ENCODE measurements at regions of chr15 and their contacts with region 1.

Region 1: DNA sequence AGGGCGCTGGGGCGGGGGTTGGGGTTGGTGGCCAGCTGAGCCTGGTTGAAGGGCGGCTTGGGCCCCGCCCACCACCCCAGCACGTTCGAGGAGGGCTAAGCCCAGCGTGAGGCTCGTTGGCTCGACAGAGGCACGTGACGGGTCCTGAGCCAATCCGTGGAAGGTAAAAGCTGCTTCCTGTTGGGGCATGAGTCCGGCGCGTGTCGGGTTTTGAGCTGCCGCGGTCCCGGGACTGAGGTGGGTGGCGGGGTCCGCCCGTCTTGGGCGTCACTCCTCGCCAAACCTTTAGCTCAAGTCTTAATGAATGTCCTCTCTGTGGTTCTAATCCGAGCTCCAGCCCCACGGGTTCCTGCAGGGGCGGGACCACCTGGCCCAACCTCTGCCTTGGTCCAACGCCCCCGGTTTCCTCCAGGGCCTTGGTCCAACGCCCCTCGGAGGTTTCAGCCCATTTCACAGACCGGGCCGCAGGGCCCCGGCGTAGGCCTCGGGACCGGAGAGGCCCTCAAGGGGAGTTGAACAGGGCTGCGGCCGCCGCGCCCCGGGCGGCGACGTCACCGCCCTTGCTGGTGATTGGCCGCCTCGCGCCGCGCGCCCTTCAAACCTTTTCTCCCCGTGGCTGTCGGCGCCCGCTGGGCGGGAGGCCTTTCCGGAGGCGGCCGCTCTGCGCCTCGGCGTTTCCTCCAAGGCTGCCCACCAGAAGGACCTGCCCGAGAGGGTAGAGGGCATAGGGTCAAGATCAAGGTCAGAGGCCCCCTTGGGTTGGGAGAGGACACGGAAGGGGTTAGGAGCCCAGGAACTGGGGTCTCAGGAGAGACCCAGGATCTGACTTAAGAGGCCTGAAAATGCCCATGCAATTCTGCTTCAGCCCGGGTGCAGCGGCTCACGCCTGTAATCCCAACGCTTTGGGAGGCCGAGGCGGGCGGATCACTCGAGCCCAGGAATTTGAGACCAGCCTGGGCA is at the start of gene RCCD1:
- DNase-seq: peak; percentile 83
- ATAC-seq: peak; percentile 47
- H3K4me3 ChIP-seq: peak within 1 kb of the TSS; percentile 77
- H3K27ac ChIP-seq: peak within 1 kb of the TSS; percentile 86
- H3K4me1 ChIP-seq: peaks cover 21% of the 10 kb centered on the region
- H3K27me3 ChIP-seq: no peaks in the 10 kb centered on the region
- CTCF ChIP-seq: no peak
- total RNA-seq, gene RCCD1: 9.2 and 11.7 TPM in 2 replicates

Region 2: DNA sequence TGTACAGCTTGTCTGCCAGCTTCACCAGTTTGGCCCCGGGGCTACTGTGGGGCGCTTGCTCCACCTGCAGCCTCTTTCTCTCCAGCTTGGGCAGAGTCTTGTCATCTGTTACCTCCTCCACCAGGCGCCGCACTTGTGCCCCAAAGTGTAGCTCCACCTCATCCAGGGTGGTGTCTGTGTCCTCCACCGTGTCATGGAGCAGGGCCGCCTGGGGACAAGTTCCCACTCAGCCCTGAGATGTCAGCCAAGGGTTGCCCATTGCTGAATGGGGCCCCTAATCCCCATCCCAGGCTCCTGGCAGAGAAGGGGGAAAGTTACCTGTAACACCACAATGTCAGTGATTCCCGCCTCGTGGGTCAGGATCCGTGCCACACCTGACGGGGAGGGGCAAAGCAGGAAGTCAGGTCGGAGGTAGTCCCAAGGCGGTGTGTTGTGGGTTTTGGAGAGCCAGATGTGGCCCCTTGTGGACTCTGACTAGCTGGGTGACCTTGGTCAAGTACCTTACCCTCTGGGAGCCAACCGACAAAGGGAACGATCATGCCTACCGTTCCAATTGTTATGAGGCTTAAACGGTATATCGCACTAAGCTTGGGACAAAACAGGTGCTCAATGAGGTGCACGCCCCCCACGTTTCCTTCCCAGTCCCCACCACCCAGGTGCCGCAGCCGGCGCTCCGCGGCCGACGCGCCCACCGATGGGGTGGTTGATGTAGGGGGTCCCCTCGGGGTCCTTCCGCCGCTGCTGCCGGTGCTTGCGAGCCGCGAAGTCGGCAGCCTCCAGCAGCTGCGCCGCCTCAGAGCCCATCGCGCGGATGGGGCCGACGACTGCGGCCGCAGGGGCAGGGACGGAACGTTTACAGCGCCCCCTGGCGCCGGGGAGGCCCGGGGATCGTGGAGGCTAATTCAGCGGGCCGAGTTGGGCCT is 23.0 kb before region 1 on chr15 and contains the start of gene HDDC3:
- CTCF ChIA-PET with region 1: interaction called, 10 read pairs
- POLR2A ChIA-PET with region 1: no interaction called
- intact Hi-C with region 1: no loop called
- DNase-seq: peak; percentile 88
- ATAC-seq: peak; percentile 51
- H3K4me3 ChIP-seq: peak within 1 kb of the TSS; percentile 87
- H3K27ac ChIP-seq: peak within 1 kb of the TSS; percentile 78
- H3K4me1 ChIP-seq: peaks cover 38% of the 10 kb centered on the region
- H3K27me3 ChIP-seq: no peaks in the 10 kb centered on the region
- CTCF ChIP-seq: peak; percentile 85
- total RNA-seq, gene HDDC3: 18.5 and 19.6 TPM in 2 replicates

Region 3: GRCh38 chr15:90994417-90995311 is 39.7 kb after region 1 on chr15 and contains the start of gene PRC1:
- CTCF ChIA-PET with region 1: no interaction called
- POLR2A ChIA-PET with region 1: no interaction called
- intact Hi-C with region 1: loop called (anchors 5 kb)
- DNase-seq: peak; percentile 99
- ATAC-seq: peak; percentile 96
- H3K4me3 ChIP-seq: peak within 1 kb of the TSS; percentile 72
- H3K27ac ChIP-seq: peak within 1 kb of the TSS; percentile 58
- H3K4me1 ChIP-seq: peaks cover 5% of the 10 kb centered on the region; the same call in 1 of the 2 replicates
- H3K27me3 ChIP-seq: no peaks in the 10 kb centered on the region
- CTCF ChIP-seq: no peak
- total RNA-seq, gene PRC1: 236 and 243 TPM in 2 replicates

Region 4: GRCh38 chr15:91022075-91022835 is 67.3 kb after region 1 on chr15 and contains the start of gene VPS33B:
- CTCF ChIA-PET with region 1: interaction called, 6 read pairs
- POLR2A ChIA-PET with region 1: interaction called, 6 read pairs
- intact Hi-C with region 1: loop called (anchors 5 kb)
- DNase-seq: peak; percentile 89
- ATAC-seq: peak; percentile 90
- H3K4me3 ChIP-seq: peak within 1 kb of the TSS; percentile 96
- H3K27ac ChIP-seq: no peak within 1 kb of the TSS
- H3K4me1 ChIP-seq: peaks cover 6% of the 10 kb centered on the region
- H3K27me3 ChIP-seq: no peaks in the 10 kb centered on the region
- CTCF ChIP-seq: no peak
- total RNA-seq, gene VPS33B: 7.5 and 8.0 TPM in 2 replicates

Region 5: DNA sequence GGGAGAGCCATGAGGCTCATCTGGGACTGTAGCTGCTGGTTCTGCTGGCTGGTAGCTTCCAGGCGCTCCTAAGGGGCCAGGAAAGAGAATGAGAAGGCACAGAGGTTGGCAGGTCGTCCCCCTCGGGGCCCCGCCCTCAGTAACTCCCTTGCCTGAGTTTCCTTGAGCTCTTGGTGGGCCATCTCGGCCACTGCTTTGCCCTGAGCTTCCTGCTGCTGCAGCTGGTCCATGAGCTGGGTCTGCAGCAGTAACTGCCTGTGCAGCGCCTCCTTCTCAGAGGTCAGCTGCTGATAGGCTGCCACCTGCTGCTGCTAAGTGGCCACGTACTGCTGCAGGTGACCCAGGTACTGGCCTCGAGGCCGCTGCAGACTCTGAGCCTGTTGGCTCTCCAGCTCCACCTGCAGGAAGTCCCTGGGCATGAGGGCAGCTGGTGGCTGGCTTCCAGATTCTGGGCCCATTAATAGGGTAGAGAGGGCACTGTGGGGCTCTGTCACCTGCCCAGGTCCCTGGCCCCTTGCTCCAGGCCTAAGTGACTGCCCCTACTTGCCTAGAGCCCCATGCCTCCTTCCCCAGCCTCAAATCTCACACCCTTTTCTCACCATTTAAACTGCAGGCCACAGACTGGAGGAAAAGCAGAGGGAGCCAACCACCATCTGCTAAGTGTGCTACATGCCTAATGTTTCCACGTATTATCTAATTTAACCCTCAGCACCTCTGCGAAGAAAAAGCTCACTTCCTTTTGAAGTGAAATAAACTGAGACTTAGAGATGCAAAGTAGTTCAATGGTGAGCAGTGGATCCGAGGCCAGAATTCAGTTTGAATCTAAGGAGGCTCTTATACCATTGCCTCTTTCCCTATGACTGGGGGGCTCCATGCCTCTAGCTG is 78.2 kb after region 1 on chr15:
- CTCF ChIA-PET with region 1: interaction called, 4 read pairs
- POLR2A ChIA-PET with region 1: no interaction called
- intact Hi-C with region 1: loop called (anchors 2 kb)
- DNase-seq: peak; percentile 76
- ATAC-seq: peak; percentile 87
- H3K4me3 ChIP-seq: no peak overlapping the region
- H3K27ac ChIP-seq: no peak overlapping the region
- H3K4me1 ChIP-seq: no peaks in the 10 kb centered on the region
- H3K27me3 ChIP-seq: no peaks in the 10 kb centered on the region; the same call in 1 of the 2 replicates
- CTCF ChIP-seq: peak; percentile 61

Region 6: DNA sequence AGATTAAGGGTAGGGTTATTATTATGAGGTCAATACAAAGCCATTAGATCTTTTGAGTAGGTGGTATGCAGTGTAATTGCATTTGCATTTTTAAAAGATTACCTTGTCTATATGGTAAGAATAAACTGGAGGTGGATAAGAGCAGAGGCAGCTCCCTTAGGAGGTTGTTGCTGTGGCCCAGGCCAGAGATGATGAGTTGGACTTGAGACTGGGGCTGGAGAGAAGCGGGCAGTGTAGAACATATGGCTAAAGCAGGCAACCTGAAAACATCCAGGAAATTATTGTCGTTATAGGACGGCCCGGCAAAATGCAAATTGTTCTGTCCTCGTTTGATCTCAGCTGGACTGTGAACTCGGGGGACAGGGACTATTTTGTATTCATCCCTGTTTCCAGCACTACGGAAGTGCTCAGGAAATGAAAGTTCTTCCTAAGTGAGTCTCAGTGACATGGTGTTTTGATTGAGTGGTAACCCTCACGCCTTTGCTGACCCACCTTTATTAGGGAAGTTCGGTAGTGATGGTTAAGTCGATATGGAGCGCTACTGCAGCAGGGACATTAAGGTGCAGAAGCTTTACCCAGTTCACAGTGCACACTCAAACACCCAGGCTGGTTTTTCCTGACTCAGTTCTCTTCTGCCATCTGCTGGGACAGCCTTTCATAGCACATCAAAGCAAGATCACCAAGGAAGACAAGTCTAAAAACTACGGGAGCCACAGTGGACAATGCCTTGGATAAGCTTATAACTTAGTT is 94.6 kb after region 1 on chr15:
- CTCF ChIA-PET with region 1: interaction called, 7 read pairs
- POLR2A ChIA-PET with region 1: no interaction called
- intact Hi-C with region 1: loop called (anchors 1 kb)
- DNase-seq: peak; percentile 74
- ATAC-seq: peak; percentile 90
- H3K4me3 ChIP-seq: no peak overlapping the region
- H3K27ac ChIP-seq: no peak overlapping the region
- H3K4me1 ChIP-seq: 0 out of 2 replicates have a peak, but pooled peaks cover 4% of the 10 kb centered on the region
- H3K27me3 ChIP-seq: peaks cover 28% of the 10 kb centered on the region
- CTCF ChIP-seq: peak; percentile 65